ENCODE measurements at regions of chr11 and their contacts with region 1.

Region 1: DNA sequence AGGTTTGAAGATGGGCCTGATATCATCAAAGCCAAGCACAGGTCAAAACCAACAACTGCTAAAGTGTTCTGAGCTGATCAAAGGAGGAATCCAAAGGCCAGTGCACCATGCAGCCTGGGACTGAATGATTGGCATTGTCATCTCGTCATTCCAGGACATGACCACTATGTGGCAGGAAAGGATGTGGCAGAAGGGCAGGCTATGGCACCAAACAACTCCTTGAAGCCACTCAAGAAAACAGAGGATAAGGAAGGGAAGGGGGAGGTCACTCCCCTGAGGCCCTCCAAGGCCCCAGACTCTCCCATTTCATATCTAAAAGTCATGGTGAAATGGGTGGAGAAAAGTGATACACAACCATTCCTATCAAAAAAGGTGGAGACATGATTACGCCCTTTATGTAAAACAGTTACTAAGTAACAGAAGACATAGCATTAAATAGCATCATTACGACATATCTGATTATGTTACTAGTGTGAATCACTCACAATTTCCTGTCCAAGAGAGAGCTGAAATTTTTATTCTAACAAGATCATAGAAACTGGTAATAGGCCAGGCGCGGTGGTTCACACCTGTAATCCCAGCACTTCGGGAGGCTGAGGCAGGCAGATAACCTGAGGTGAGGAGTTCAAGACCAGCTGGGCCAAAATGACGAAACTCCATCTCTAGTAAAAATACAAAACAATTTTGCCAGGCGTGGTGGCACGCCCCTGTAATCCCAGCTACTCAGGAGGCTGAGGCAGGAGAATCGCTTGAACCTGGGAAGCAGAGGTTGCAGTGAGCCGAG is 49.3 kb downstream of the AHNAK start:
- DNase-seq: no peak
- ATAC-seq: peak; percentile 45

Region 2: GRCh38 chr11:62444236-62444833 is 53.0 kb before region 1 on chr11:
- intact Hi-C with region 1: loop called (anchors 5 kb)
- DNase-seq: peak; percentile 82
- ATAC-seq: peak; percentile 66